CD4-positive, alpha-beta memory T cell (primary cell): ENCODE measurements at regions of chrX and their contacts with region 1.

Region 1: GRCh38 chrX:49291615-49292337 is 11.7 kb upstream of the GAGE10 start:
- DNase-seq: peak; percentile 56 to 64 (median 59)
- H3K4me3 ChIP-seq: no peak overlapping the region
- H3K4me3 Mint-ChIP-seq: peak overlapping the region in 5 of 8 donors; percentile 1 to 84 (median 57)
- H3K27ac ChIP-seq: no peak overlapping the region
- H3K27ac Mint-ChIP-seq: peak overlapping the region in 6 of 7 donors; percentile 10 to 91 (median 74)
- H3K4me1 ChIP-seq: peaks cover 34% of the 10 kb centered on the region
- H3K4me1 Mint-ChIP-seq: peaks cover 22 to 42% (median 29%) of the 10 kb centered on the region in 4 donors
- H3K27me3 ChIP-seq: no peaks in the 10 kb centered on the region
- H3K27me3 Mint-ChIP-seq: no peaks in the 10 kb centered on the region

Region 2: GRCh38 chrX:49309401-49309981 is 17.7 kb after region 1 on chrX:
- CTCF ChIA-PET with region 1: interaction called, 14 read pairs
- POLR2A ChIA-PET with region 1: interaction called, 9 read pairs
- intact Hi-C with region 1: no loop called
- DNase-seq: peak; percentile 28 to 47 (median 40)
- H3K4me3 ChIP-seq: peak overlapping the region; percentile 23 to 57
- H3K4me3 Mint-ChIP-seq: peak overlapping the region; percentile 85 to 94 (median 88)
- H3K27ac ChIP-seq: peak overlapping the region; percentile 47
- H3K27ac Mint-ChIP-seq: peak overlapping the region; percentile 90 to 97 (median 93)
- H3K4me1 ChIP-seq: peaks cover 17% of the 10 kb centered on the region
- H3K4me1 Mint-ChIP-seq: peaks cover 19 to 29% (median 20%) of the 10 kb centered on the region in 4 donors
- H3K27me3 ChIP-seq: no peaks in the 10 kb centered on the region
- H3K27me3 Mint-ChIP-seq: no peaks in the 10 kb centered on the region

Region 3: DNA sequence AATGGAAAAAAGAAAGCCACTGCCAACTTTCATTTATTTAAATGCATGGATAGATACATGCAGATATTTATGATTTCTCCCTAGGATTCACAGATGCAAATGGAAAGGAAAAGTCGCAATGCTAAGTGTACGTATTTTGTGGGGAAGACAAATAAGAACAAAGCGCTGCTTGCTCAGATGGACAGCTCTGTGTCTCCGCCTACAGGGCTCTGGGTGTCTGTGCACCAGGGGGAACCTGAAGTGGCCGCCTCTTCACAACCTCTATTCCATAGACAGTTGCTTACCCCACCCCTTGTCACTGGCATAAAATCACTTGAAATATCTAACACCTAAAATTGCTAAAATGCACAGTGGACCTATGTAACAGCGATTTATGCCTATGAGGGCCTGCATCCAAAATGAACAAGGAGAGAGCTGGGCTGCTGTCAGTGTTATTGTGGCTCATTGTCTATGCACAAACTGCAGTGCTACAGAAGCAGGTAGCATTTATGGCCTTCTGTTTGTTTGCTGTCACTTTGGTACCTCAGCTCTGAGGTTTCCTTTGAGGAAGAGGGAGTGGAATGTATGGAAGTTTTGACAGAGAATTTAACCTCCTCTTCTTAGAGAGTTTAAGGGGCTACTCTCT is 462.6 kb after region 1 on chrX:
- CTCF ChIA-PET with region 1: interaction called, 4 read pairs
- POLR2A ChIA-PET with region 1: no interaction called
- intact Hi-C with region 1: loop called (anchors 1 kb)
- DNase-seq: peak in 4 of 5 donors; percentile 47 to 51 (median 49)
- H3K4me3 ChIP-seq: no peak overlapping the region
- H3K4me3 Mint-ChIP-seq: no peak overlapping the region
- H3K27ac ChIP-seq: no peak overlapping the region
- H3K27ac Mint-ChIP-seq: no peak overlapping the region
- H3K4me1 ChIP-seq: no peaks in the 10 kb centered on the region
- H3K4me1 Mint-ChIP-seq: peaks cover 0 to 2% (median 0%) of the 10 kb centered on the region in 4 donors
- H3K27me3 ChIP-seq: no peaks in the 10 kb centered on the region
- H3K27me3 Mint-ChIP-seq: peaks cover 0 to 3% of the 10 kb centered on the region in 2 donors

Region 4: GRCh38 chrX:50402881-50403280 is 1111.1 kb after region 1 on chrX:
- CTCF ChIA-PET with region 1: no interaction called
- POLR2A ChIA-PET with region 1: no interaction called
- intact Hi-C with region 1: no loop called
- DNase-seq: no peak
- H3K4me3 ChIP-seq: no peak overlapping the region
- H3K4me3 Mint-ChIP-seq: no peak overlapping the region
- H3K27ac ChIP-seq: no peak overlapping the region
- H3K27ac Mint-ChIP-seq: no peak overlapping the region
- H3K4me1 ChIP-seq: no peaks in the 10 kb centered on the region
- H3K4me1 Mint-ChIP-seq: no peaks in the 10 kb centered on the region
- H3K27me3 ChIP-seq: no peaks in the 10 kb centered on the region
- H3K27me3 Mint-ChIP-seq: peaks cover 2 to 3% of the 10 kb centered on the region in 2 donors